CD8-positive, alpha-beta T cell (primary cell): ENCODE measurements at regions of chrX and their contacts with region 1.

Region 1: GRCh38 chrX:78593701-78594100 is 65.4 kb downstream of the RTL3 start:
- DNase-seq: no peak
- ATAC-seq: no peak
- H3K4me3 ChIP-seq: no peak overlapping the region
- H3K4me3 Mint-ChIP-seq: no peak overlapping the region
- H3K27ac ChIP-seq: no peak overlapping the region
- H3K27ac Mint-ChIP-seq: no peak overlapping the region
- H3K4me1 ChIP-seq: no peaks in the 10 kb centered on the region
- H3K4me1 Mint-ChIP-seq: no peaks in the 10 kb centered on the region
- H3K27me3 ChIP-seq: no peaks in the 10 kb centered on the region
- H3K27me3 Mint-ChIP-seq: no peaks in the 10 kb centered on the region
- CTCF ChIP-seq: no peak

Region 2: GRCh38 chrX:78643096-78643495 is 49.4 kb after region 1 on chrX:
- CTCF ChIA-PET with region 1: no interaction called
- POLR2A ChIA-PET with region 1: no interaction called
- intact Hi-C with region 1: loop called in 1 of 2 experiments (anchors 10 kb)
- DNase-seq: peak in 1 of 9 experiments; percentile 12
- ATAC-seq: no peak
- H3K4me3 ChIP-seq: no peak overlapping the region
- H3K4me3 Mint-ChIP-seq: no peak overlapping the region
- H3K27ac ChIP-seq: no peak overlapping the region
- H3K27ac Mint-ChIP-seq: no peak overlapping the region
- H3K4me1 ChIP-seq: peaks cover 13% of the 10 kb centered on the region
- H3K4me1 Mint-ChIP-seq: peaks cover 11% of the 10 kb centered on the region
- H3K27me3 ChIP-seq: no peaks in the 10 kb centered on the region
- H3K27me3 Mint-ChIP-seq: no peaks in the 10 kb centered on the region
- CTCF ChIP-seq: no peak

Region 3: GRCh38 chrX:78658845-78659744 is 65.4 kb after region 1 on chrX and contains the start of gene RTL3:
- CTCF ChIA-PET with region 1: no interaction called
- POLR2A ChIA-PET with region 1: no interaction called
- intact Hi-C with region 1: no loop called
- DNase-seq: peak in 3 of 9 experiments; percentile 13 to 45 (median 30)
- ATAC-seq: no peak
- H3K4me3 ChIP-seq: no peak within 1 kb of the TSS
- H3K4me3 Mint-ChIP-seq: no peak within 1 kb of the TSS
- H3K27ac ChIP-seq: no peak within 1 kb of the TSS
- H3K27ac Mint-ChIP-seq: no peak within 1 kb of the TSS
- H3K4me1 ChIP-seq: peaks cover 4% of the 10 kb centered on the region
- H3K4me1 Mint-ChIP-seq: peaks cover 18% of the 10 kb centered on the region
- H3K27me3 ChIP-seq: no peaks in the 10 kb centered on the region
- H3K27me3 Mint-ChIP-seq: no peaks in the 10 kb centered on the region
- CTCF ChIP-seq: no peak
- total RNA-seq, gene RTL3: not detected